ENCODE measurements at regions of chr2 and their contacts with region 1.

Region 1: DNA sequence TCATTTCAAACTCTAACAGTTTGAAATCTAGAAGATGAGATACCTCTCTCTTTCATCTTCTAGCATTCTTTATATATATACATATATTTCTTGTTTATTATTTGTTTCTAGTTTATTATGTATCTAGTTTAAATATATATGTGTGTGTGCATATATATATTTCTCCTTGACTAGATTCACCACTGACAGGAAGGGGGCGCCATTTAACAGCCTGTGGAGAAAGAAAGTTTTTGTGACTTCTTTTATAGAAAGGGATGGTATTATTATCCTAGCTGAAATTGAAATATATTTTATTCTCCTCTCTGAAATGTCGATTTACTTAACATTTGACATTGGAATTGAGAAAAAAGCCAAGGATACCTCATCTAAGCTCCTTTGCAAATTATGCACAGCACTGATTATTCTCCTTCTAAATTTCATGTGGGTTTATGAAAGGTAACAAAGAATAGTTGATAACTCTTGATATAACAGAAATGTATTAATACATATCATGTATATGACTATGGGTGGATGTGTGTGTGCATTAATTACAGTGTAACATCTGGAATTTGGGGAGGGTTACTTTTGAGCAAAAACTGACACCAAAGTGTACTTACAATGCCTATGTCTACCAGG is 160.7 kb upstream of the NT5C1B start:
- DNase-seq: peak; percentile 12
- ATAC-seq: peak; percentile 53; the same call in 1 of the 2 replicates
- H3K4me3 ChIP-seq: no peak overlapping the region
- H3K27ac ChIP-seq: no peak overlapping the region
- H3K4me1 ChIP-seq: no peaks in the 10 kb centered on the region
- H3K27me3 ChIP-seq: peaks cover 5% of the 10 kb centered on the region; the same call in 1 of the 2 replicates
- CTCF ChIP-seq: peak; percentile 67 to 75 (median 74); a peak in 5 of 6 replicates
- POLR2A ChIP-seq: no peak
- RAD21 ChIP-seq: peak; percentile 88

Region 2: DNA sequence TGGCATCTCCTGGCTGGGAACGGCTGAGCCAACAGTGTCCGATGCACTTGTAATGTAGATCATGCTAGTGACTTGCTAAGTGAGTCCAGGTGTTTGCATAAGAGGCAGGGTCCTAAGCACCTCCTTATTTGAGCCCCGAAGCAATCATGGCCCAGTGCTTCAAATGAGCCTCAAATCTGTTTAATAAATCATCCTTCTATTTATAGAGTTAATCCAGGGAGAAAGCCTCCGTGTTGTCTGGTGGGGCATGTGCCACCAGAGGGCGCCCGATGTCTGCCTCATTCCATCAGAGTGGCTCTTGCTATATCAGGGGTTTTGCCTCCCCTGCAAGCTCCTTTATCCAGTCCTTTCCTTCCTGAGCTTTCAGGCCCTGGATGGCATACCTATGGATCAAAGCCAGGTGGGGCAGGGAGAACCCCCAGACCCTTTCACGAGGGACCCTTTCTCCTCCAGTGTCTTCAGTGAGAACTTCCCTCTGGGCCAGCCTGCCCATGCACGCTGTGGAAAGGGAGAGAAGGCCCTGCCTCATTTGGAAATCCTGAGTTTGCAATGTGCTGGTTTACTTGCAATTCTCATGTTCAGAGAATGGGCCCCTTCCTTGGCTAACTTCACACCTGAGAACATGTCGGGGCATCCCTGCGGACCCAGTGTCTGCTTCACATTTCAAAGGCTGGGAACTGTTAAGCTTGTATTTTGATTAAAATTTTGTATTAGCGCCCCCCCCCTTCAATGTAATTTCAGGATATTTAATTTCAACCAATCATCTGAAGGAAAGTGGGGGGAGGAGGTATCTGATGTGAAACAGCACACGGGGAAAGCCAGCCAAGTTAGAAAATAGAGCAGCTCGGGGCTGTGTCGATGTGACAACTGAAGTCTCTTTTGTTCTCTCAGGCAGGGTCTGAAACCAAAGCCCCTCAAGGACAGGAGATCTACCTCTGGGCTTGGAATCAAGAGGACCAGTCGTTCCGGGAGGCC is 229.3 kb before region 1 on chr2:
- CTCF ChIA-PET with region 1: interaction called, 3 read pairs
- POLR2A ChIA-PET with region 1: no interaction called
- RAD21 ChIA-PET with region 1: no interaction called
- intact Hi-C with region 1: loop called (anchors 5 kb)
- DNase-seq: peak; percentile 37
- ATAC-seq: peak; percentile 97
- H3K4me3 ChIP-seq: no peak overlapping the region
- H3K27ac ChIP-seq: no peak overlapping the region
- H3K4me1 ChIP-seq: no peaks in the 10 kb centered on the region
- H3K27me3 ChIP-seq: peaks cover 11% of the 10 kb centered on the region; the same call in 1 of the 2 replicates
- CTCF ChIP-seq: peak; percentile 67 to 91 (median 84)
- POLR2A ChIP-seq: no peak
- RAD21 ChIP-seq: peak; percentile 91

Region 3: DNA sequence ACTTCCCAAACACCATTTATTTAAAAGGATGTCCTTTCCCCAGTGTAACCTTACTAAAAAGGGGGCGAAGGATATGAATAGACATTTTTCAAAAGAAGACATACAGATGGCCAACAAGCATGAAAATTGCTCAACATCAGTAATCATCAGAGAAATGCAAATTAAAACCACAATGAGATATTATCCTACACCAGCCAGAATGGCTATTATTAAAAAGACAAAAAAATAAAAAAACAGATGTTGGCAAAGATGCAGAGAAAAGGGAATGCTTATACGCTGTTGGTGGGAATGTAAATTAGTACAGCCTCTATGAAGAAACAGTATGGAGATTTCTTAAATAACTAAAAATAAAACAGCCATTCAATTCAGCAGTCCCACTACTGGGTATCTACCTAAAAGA is 18.4 kb before region 1 on chr2:
- CTCF ChIA-PET with region 1: no interaction called
- POLR2A ChIA-PET with region 1: no interaction called
- RAD21 ChIA-PET with region 1: no interaction called
- intact Hi-C with region 1: loop called (anchors 1 kb)
- DNase-seq: no peak
- ATAC-seq: no peak
- H3K4me3 ChIP-seq: no peak overlapping the region
- H3K27ac ChIP-seq: no peak overlapping the region
- H3K4me1 ChIP-seq: no peaks in the 10 kb centered on the region
- H3K27me3 ChIP-seq: no peaks in the 10 kb centered on the region; the same call in 1 of the 2 replicates
- CTCF ChIP-seq: no peak
- POLR2A ChIP-seq: no peak
- RAD21 ChIP-seq: no peak

Region 4: DNA sequence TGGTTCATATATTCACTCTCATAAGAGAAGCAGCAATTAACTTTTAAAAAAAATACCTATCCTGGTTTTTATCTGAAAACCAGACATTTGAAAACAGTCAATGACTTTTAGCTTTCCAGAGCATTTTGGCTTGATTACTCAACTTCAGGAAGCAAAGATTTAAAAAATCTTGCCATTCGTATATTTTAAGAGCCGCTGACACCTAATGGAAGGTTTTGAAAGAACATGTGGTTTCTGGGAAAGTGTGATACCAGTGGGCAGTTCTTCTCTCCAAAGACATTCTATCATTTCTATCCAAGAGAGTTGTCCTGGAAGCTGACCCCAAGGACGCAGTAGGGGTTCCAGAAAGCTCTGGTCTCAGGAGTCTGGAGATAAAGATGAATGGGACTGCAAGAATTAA is 917.1 kb after region 1 on chr2:
- CTCF ChIA-PET with region 1: no interaction called
- POLR2A ChIA-PET with region 1: no interaction called
- RAD21 ChIA-PET with region 1: no interaction called
- intact Hi-C with region 1: loop called (anchors 5 kb)
- DNase-seq: peak; percentile 41
- ATAC-seq: peak; percentile 73
- H3K4me3 ChIP-seq: no peak overlapping the region
- H3K27ac ChIP-seq: no peak overlapping the region
- H3K4me1 ChIP-seq: peaks cover 4 to 6% of the 10 kb centered on the region in 2 experiments; a peak in 3 of 4 replicates
- H3K27me3 ChIP-seq: no peaks in the 10 kb centered on the region
- CTCF ChIP-seq: peak; percentile 42 to 72 (median 53)
- POLR2A ChIP-seq: no peak
- RAD21 ChIP-seq: peak; percentile 83

Region 5: DNA sequence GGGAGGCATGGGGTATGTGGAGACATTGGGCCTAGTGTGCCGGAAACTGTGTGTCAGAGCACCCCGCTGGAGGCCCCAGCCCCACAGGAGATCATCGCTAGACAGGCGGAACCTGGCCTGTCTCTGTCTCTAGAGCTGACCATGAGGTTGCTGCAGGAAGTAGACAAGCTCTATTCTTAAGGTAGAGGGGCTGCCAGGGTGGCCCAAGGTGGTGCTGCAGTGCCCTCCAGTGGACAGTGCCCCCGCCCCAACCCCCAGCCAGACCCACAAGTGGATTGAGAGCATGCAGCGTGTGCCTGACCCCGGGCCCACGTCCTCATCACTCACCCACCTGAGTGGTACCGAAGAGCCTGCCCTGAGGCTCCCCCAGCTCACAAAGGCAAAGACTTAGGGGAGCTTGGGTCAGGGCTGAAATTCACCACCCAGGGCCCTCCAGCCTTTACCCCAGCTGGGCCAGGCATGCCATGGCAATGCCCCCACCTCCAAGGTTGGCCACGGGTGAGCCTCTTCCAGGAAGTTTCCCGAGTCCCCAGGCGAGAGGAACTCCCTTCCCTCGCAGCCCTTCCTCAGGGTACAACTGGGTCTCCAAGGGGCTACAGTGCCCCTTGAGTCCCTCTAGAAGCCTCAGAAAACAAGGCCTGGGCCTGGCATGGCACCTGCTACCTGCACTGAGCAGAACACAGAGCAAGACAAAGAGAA is 996.7 kb after region 1 on chr2:
- CTCF ChIA-PET with region 1: no interaction called
- POLR2A ChIA-PET with region 1: no interaction called
- RAD21 ChIA-PET with region 1: no interaction called
- intact Hi-C with region 1: loop called (anchors 10 kb)
- DNase-seq: no peak
- ATAC-seq: peak; percentile 72
- H3K4me3 ChIP-seq: no peak overlapping the region
- H3K27ac ChIP-seq: no peak overlapping the region
- H3K4me1 ChIP-seq: peaks cover 0 to 5% of the 10 kb centered on the region in 2 experiments; a peak in 1 of 4 replicates
- H3K27me3 ChIP-seq: no peaks in the 10 kb centered on the region
- CTCF ChIP-seq: peak; percentile 15 to 56 (median 53); a peak in 4 of 6 replicates
- POLR2A ChIP-seq: no peak
- RAD21 ChIP-seq: peak; percentile 68